Mucosa of descending colon (tissue), 3 donors: ENCODE measurements at regions of chr22 and their contacts with region 1.

Region 1: DNA sequence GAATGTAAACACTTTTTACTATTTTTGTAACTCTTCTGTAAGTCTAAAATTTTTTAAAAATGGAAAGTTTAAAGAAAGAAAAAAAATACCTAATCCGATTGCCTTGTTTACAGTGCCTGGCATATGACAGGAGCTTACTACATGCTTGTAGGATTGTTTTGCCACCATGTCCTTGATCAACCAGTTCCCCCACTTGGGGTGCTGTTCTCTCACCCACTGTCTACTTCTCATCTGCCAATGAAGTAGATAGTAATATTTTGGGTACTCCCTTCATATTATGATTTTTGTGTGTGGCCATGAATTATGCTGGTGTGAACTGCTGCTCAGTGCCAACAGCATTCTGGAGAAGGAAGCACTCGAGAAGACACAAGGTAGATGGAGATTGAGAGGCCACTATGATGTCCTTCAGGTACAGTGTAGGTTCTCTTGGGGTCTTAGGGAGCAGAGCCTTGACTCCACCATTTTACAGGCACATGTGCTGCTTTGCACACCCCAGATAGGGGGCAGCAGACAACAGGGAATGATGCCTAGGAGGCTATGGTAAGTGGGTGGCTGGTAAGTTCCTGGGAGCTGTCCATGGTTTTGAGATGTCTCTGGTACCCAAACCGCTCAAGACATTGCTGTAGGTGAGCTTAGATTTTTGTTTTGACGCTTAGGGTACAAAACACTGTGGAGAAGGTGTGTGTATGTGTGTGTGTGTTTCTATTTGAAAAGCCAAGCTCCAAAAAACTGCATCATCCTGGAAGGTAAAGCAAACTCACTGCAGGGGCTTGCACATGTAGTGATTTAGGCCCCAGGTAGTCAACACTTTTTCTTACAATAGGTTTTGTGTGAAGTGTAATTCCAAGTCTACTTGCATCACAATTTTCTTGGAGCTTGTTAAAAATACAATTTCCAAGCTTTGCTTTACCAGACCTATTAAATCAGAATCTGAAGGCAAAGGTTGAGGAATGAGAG is 494.5 kb upstream of the LARGE1 start:
- DNase-seq: peak in 2 of 3 donors; percentile 59 to 77
- ATAC-seq: peak; percentile 93
- H3K4me3 ChIP-seq: no peak overlapping the region
- H3K4me1 ChIP-seq: no peaks in the 10 kb centered on the region
- CTCF ChIP-seq: peak; percentile 33

Region 2: DNA sequence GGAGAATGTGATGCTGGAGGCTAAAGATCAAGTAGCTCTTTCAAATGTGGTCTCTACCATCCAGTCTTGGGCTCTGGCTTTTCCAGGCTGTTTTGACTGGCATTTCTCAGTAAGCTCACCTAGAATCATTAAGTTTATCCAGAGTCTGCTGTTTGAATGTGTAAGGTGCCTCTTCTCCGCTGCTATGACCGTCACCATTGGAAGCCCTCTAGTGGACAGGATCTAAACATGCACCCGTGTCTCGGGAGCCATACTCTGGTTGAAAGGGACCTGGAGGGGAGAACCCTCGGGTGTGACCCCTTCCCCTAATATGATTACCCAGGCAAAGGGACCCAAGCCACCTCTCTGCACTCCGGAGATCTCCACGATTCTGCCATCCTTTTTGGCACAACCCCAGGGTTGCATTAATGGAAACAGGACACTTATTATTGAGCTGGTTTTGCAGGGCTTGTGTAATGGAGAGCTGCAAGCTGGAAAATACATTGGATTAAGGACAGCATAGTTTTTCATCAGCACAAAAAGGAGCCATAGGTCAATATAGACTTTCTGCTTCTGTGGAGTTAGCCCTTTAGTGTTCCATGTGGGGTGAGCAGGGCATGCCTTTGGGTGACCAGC is 303.4 kb before region 1 on chr22:
- intact Hi-C with region 1: no loop called
- DNase-seq: peak in 1 of 3 donors; percentile 42
- ATAC-seq: peak; percentile 62
- H3K4me3 ChIP-seq: no peak overlapping the region
- H3K4me1 ChIP-seq: peaks cover under 1% of the 10 kb centered on the region
- CTCF ChIP-seq: peak; percentile 31

Region 3: GRCh38 chr22:34225278-34225677 is 189.5 kb before region 1 on chr22:
- intact Hi-C with region 1: no loop called
- DNase-seq: no peak
- ATAC-seq: no peak
- H3K4me3 ChIP-seq: no peak overlapping the region
- H3K4me1 ChIP-seq: no peaks in the 10 kb centered on the region
- CTCF ChIP-seq: no peak

Region 4: DNA sequence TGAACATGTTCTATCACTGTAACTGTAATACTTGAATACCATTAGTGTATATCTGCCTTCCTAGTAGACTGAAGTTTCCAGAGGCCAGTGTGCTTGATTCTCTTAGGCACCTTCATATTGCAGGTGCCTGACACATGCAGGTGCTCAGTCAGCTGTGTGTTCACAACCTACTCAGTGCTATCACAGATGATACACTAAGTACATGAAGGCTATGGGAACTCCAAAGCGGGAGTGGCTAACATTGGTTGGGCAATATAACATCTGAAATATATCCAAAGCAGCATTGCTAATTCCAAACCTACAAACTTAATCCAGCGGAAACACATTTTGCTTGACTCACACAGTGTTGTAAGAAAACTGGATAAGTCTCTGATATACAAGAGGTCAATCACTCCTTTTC is 111.9 kb after region 1 on chr22:
- intact Hi-C with region 1: no loop called
- DNase-seq: no peak
- ATAC-seq: no peak
- H3K4me3 ChIP-seq: no peak overlapping the region
- H3K4me1 ChIP-seq: no peaks in the 10 kb centered on the region
- CTCF ChIP-seq: no peak

Region 5: DNA sequence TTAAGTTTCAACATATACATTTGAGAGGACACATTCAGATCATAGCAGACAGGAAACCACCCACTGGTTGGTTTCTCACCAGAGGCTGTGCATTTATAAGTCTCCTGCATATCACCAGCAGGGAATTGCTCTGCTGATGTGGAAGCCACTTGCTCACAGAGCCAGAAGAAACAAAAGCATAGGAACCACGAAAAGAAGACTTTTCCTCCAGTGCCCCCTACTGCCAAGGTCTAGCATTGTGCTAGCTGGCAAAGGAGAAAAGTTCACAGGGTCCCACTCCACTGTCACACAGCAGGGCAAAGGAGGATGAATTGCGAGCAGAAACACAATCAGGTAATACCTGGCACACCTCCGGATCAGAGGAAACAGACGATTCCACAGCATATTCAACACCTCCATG is 622.3 kb after region 1 on chr22:
- intact Hi-C with region 1: loop called in 1 of 2 experiments (anchors 10 kb)
- DNase-seq: no peak
- ATAC-seq: peak; percentile 41
- H3K4me3 ChIP-seq: no peak overlapping the region
- H3K4me1 ChIP-seq: no peaks in the 10 kb centered on the region
- CTCF ChIP-seq: no peak

Region 6: GRCh38 chr22:35150183-35151107 is 735.7 kb after region 1 on chr22:
- intact Hi-C with region 1: loop called in 1 of 2 experiments (anchors 10 kb)
- DNase-seq: peak in 2 of 3 donors; percentile 81 to 86
- ATAC-seq: peak; percentile 79
- H3K4me3 ChIP-seq: no peak overlapping the region
- H3K4me1 ChIP-seq: no peaks in the 10 kb centered on the region
- CTCF ChIP-seq: peak; percentile 45